HepG2 (cell line): ENCODE measurements at regions of chr5 and their contacts with region 1.

Region 1: GRCh38 chr5:145946112-145946861 is 9.9 kb downstream of the SH3RF2 start:
- DNase-seq: peak; percentile 77
- ATAC-seq: peak; percentile 64
- H3K4me3 ChIP-seq: no peak overlapping the region
- H3K27ac ChIP-seq: peak overlapping the region; percentile 39
- H3K4me1 ChIP-seq: peaks cover 60% of the 10 kb centered on the region
- H3K27me3 ChIP-seq: no peaks in the 10 kb centered on the region
- CTCF ChIP-seq: no peak
- EP300 ChIP-seq: peak in 1 of 2 experiments; percentile 56; a peak in 1 of 4 replicates
- POLR2A ChIP-seq: no peak
- RAD21 ChIP-seq: no peak

Region 2: DNA sequence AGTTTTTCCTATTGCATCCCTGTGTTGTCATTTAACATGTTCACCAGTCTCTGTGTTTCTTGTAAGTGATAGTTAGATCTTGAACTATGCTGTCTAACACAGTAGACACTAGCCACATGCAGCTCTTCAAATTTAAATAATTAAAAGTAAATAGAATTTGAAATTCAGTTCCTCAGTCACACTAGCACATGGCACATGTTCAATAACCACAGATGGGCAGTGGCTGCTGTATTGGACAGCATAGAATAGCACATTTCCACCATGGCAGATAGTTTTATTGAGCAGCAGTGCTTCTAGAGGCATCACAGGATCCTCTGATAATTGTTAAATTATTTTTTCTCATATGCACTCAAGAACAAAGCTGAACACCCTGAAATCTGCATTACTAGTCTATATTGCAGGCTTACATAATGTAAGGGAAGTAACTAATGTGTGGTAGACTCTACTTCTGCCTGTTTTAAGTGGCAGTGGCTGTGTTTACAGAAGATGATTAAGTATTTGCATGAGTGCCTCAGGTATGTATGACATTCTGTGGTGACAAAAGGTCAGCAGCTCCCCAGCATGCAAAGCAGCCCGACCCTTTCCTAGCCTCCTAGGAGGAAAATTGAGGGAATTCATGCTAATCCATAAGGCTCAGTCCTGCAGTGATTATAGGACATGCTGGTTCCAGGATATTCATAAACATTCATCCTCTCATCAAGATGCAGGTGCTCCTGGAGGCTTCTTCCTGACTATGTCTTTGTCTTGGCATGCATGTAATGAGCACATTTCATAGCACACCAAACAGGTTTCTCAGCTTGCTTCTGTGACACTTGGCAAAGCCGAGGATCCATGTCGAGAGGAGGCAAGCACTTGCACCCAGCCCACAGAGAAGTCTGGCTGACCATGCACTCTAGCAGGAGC is 35.6 kb after region 1 on chr5:
- CTCF ChIA-PET with region 1: no interaction called
- POLR2A ChIA-PET with region 1: interaction called, 40 read pairs
- in situ Hi-C with region 1: no loop called
- intact Hi-C with region 1: loop called (anchors 1 kb)
- DNase-seq: peak; percentile 79
- ATAC-seq: peak; percentile 39
- H3K4me3 ChIP-seq: no peak overlapping the region; a peak in 1 of 6 replicates
- H3K27ac ChIP-seq: peak overlapping the region; percentile 24
- H3K4me1 ChIP-seq: peaks cover 72% of the 10 kb centered on the region
- H3K27me3 ChIP-seq: no peaks in the 10 kb centered on the region
- CTCF ChIP-seq: no peak
- EP300 ChIP-seq: peak in 1 of 2 experiments; percentile 83; a peak in 2 of 4 replicates
- POLR2A ChIP-seq: no peak
- RAD21 ChIP-seq: no peak